WTC11 (cell line): ENCODE measurements at regions of chr19 and their contacts with region 1.

Region 1: DNA sequence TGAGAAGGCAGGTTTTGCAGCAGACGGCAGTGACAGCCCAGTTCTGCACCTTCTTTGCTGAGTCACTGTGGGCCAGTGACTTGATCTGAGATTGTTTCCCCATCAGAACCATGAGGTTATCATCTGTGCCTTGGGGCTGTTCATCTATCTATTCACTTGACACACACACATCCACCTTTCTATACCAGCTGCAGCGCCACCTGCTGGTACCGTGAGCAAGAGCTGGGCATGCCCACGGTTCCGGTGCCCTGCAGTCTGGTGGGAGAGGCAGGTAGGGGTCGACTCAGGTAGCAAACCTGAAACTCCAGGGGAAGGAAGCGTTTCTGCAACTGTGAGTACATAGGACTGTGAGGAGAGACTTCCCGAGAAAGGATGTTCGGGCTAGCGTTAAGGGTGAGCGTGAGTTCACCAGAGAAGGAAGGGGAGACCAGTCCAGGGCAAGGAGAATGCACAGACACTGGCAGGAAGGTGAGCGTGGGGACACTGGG is 7.5 kb upstream of the LIN7B start:
- DNase-seq: peak; percentile 83
- ATAC-seq: peak; percentile 80
- H3K4me3 Mint-ChIP-seq: peak overlapping the region; percentile 7; the same call in 1 of the 2 replicates
- H3K27ac Mint-ChIP-seq: peak overlapping the region; percentile 95
- H3K4me1 Mint-ChIP-seq: peaks cover 13% of the 10 kb centered on the region
- H3K27me3 Mint-ChIP-seq: no peaks in the 10 kb centered on the region
- CTCF ChIP-seq: peak; percentile 78

Region 2: DNA sequence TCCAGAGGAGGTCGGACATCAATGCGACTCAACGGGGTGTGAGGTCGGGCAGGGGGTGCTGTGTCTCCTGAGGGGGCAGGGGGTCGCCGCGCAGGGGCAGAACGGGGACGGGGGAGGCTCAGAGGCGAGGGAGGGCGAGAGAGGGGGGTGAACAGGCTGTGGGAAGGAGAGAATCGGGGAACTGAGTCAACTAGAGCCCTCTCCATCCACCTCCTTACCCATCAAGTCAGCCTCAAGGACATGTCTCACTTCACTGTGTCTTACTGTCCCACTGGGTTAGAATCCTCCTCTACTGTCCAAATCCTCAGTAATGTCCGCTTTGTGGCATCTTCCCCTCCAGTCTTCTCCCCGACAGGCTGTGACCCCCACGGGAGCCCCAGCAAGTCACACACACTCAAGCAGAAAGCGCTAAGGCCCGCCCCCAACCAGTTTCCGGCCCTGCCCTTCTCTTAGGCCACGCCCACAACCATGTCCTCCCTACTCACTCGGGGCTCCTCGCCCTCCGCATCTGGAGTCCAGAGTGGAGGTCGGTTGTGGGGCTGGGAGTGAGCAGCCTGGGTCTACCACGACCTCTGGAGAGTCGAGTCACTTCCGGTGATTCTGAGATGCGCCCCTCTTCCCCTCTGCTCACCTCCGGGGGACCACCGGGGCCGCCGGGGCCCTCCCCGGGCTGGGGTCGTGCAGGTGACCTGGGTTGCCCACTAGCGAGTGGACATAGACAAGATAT is 247.5 kb before region 1 on chr19:
- CTCF ChIA-PET with region 1: no interaction called
- POLR2A ChIA-PET with region 1: no interaction called
- DNase-seq: peak; percentile 76
- ATAC-seq: peak; percentile 43
- H3K4me3 Mint-ChIP-seq: peak overlapping the region; percentile 50
- H3K27ac Mint-ChIP-seq: peak overlapping the region; percentile 87; the same call in 1 of the 2 replicates
- H3K4me1 Mint-ChIP-seq: peaks cover 10% of the 10 kb centered on the region
- H3K27me3 Mint-ChIP-seq: no peaks in the 10 kb centered on the region; the same call in 1 of the 2 replicates
- CTCF ChIP-seq: no peak

Region 3: GRCh38 chr19:49118565-49119410 is 12.1 kb after region 1 on chr19 and contains the start of gene C19orf73:
- CTCF ChIA-PET with region 1: interaction called, 22 read pairs
- POLR2A ChIA-PET with region 1: interaction called, 4 read pairs
- DNase-seq: peak; percentile 94
- ATAC-seq: peak; percentile 81
- H3K4me3 Mint-ChIP-seq: peak within 1 kb of the TSS; percentile 75
- H3K27ac Mint-ChIP-seq: peak within 1 kb of the TSS; percentile 61
- H3K4me1 Mint-ChIP-seq: peaks cover 14% of the 10 kb centered on the region
- H3K27me3 Mint-ChIP-seq: peaks cover 64% of the 10 kb centered on the region
- CTCF ChIP-seq: no peak
- total RNA-seq, gene C19orf73: 3.1 to 3.4 TPM (median 3.2 TPM) in 3 replicates

Region 4: GRCh38 chr19:49127674-49128544 is 21.2 kb after region 1 on chr19:
- CTCF ChIA-PET with region 1: interaction called, 12 read pairs
- POLR2A ChIA-PET with region 1: no interaction called
- DNase-seq: peak; percentile 98
- ATAC-seq: peak; percentile 90
- H3K4me3 Mint-ChIP-seq: peak overlapping the region; percentile 89
- H3K27ac Mint-ChIP-seq: peak overlapping the region; percentile 97
- H3K4me1 Mint-ChIP-seq: peaks cover 25% of the 10 kb centered on the region
- H3K27me3 Mint-ChIP-seq: peaks cover 66% of the 10 kb centered on the region
- CTCF ChIP-seq: no peak